Activated naive CD4-positive, alpha-beta T cell treated with anti-CD3 and anti-CD28 coated beads for 36 hours (primary cell): ENCODE measurements at regions of chr12 and their contacts with region 1.

Region 1: GRCh38 chr12:102119674-102120563 is at the starts of genes NUP37 and PARPBP:
- DNase-seq: peak; percentile 95
- H3K4me3 Mint-ChIP-seq: peak within 1 kb of the TSS; percentile 90
- H3K27ac Mint-ChIP-seq: peak within 1 kb of the TSS; percentile 80
- H3K4me1 Mint-ChIP-seq: peaks cover 19% of the 10 kb centered on the region
- H3K27me3 Mint-ChIP-seq: no peaks in the 10 kb centered on the region
- total RNA-seq, gene NUP37: 85.3 to 88.0 TPM
- total RNA-seq, gene PARPBP: 28.8 to 29.5 TPM

Region 2: GRCh38 chr12:100266835-100267618 is 1852.9 kb before region 1 on chr12 and contains the starts of genes DEPDC4 and SCYL2:
- CTCF ChIA-PET with region 1: no interaction called
- intact Hi-C with region 1: loop called (anchors 2 kb)
- DNase-seq: peak; percentile 95
- H3K4me3 Mint-ChIP-seq: peak within 1 kb of the TSS; percentile 96
- H3K27ac Mint-ChIP-seq: peak within 1 kb of the TSS; percentile 97
- H3K4me1 Mint-ChIP-seq: peaks cover 28% of the 10 kb centered on the region
- H3K27me3 Mint-ChIP-seq: no peaks in the 10 kb centered on the region
- total RNA-seq, gene DEPDC4: 3.4 to 3.6 TPM
- total RNA-seq, gene SCYL2: 19.4 to 20.7 TPM

Region 3: GRCh38 chr12:101830367-101831325 is 289.3 kb before region 1 on chr12 and contains the start of gene GNPTAB:
- CTCF ChIA-PET with region 1: no interaction called
- intact Hi-C with region 1: loop called (anchors 1 kb)
- DNase-seq: peak; percentile 97
- H3K4me3 Mint-ChIP-seq: peak within 1 kb of the TSS; percentile 96
- H3K27ac Mint-ChIP-seq: peak within 1 kb of the TSS; percentile 84
- H3K4me1 Mint-ChIP-seq: peaks cover 43% of the 10 kb centered on the region
- H3K27me3 Mint-ChIP-seq: no peaks in the 10 kb centered on the region
- total RNA-seq, gene GNPTAB: 13.6 to 13.7 TPM

Region 4: GRCh38 chr12:101923045-101923718 is 196.7 kb before region 1 on chr12:
- CTCF ChIA-PET with region 1: interaction called, 3 read pairs
- intact Hi-C with region 1: loop called (anchors 1 kb)
- DNase-seq: no peak
- H3K4me3 Mint-ChIP-seq: no peak overlapping the region
- H3K27ac Mint-ChIP-seq: no peak overlapping the region
- H3K4me1 Mint-ChIP-seq: peaks cover 4% of the 10 kb centered on the region
- H3K27me3 Mint-ChIP-seq: peaks cover 2% of the 10 kb centered on the region

Region 5: GRCh38 chr12:102023343-102023930 is 96.5 kb before region 1 on chr12:
- CTCF ChIA-PET with region 1: no interaction called
- intact Hi-C with region 1: no loop called
- DNase-seq: no peak
- H3K4me3 Mint-ChIP-seq: no peak overlapping the region
- H3K27ac Mint-ChIP-seq: no peak overlapping the region
- H3K4me1 Mint-ChIP-seq: no peaks in the 10 kb centered on the region
- H3K27me3 Mint-ChIP-seq: no peaks in the 10 kb centered on the region

Region 6: DNA sequence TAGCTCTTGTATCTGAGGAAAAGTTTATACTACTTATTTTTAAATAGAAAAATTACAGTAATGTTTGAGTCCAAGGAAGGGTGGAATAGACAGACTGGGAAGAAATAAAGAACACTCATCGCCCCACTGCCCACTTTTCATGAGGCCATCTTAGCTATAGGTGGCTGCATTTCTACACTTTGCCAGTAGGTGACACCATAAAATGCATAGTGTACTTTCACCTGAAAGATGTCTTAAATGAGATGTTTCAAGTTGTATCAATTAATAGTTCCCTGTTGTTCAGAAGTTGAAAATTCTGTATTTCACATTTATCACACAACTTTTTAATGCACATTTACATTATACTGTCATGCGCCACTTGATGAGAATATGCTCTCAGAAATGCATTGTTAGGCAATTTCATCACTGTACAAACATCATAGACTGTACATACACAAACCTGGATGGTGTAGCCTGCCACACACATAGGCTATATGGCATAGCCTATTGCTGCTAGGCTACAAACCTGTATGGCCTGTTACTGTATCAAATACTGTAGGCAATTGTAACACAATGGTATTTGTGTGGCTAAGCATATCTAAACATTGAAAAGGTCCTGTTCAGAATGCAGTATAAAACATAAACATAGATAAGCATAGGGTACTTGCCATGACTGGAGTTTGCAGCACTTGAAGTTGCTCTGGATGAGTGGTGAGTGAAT is 50.2 kb after region 1 on chr12:
- CTCF ChIA-PET with region 1: interaction called, 3 read pairs
- intact Hi-C with region 1: loop called (anchors 1 kb)
- DNase-seq: peak; percentile 30
- H3K4me3 Mint-ChIP-seq: no peak overlapping the region
- H3K27ac Mint-ChIP-seq: no peak overlapping the region
- H3K4me1 Mint-ChIP-seq: peaks cover 11% of the 10 kb centered on the region
- H3K27me3 Mint-ChIP-seq: no peaks in the 10 kb centered on the region

Region 7: GRCh38 chr12:102484428-102484958 is 364.6 kb after region 1 on chr12:
- CTCF ChIA-PET with region 1: no interaction called
- intact Hi-C with region 1: loop called (anchors 2 kb)
- DNase-seq: peak; percentile 70
- H3K4me3 Mint-ChIP-seq: peak overlapping the region; percentile 32
- H3K27ac Mint-ChIP-seq: peak overlapping the region; percentile 87
- H3K4me1 Mint-ChIP-seq: peaks cover 22% of the 10 kb centered on the region
- H3K27me3 Mint-ChIP-seq: peaks cover 7% of the 10 kb centered on the region